SK-N-SH (cell line): ENCODE measurements at regions of chr17 and their contacts with region 1.

Region 1: GRCh38 chr17:42843358-42843934 is 934 bp upstream of the AOC2 start:
- DNase-seq: peak; percentile 80
- H3K4me3 ChIP-seq: no peak overlapping the region; a peak in 1 of 4 replicates
- H3K27ac ChIP-seq: no peak overlapping the region
- H3K4me1 ChIP-seq: no peaks in the 10 kb centered on the region
- H3K27me3 ChIP-seq: no peaks in the 10 kb centered on the region
- CTCF ChIP-seq: peak; percentile 92
- EP300 ChIP-seq: no peak
- RAD21 ChIP-seq: peak; percentile 81

Region 2: GRCh38 chr17:42819944-42820535 is 23.4 kb before region 1 on chr17:
- CTCF ChIA-PET with region 1: interaction called, 22 read pairs
- POLR2A ChIA-PET with region 1: no interaction called
- DNase-seq: peak; percentile 70
- H3K4me3 ChIP-seq: peak overlapping the region in 1 of 2 experiments; percentile 27; a peak in 1 of 4 replicates
- H3K27ac ChIP-seq: no peak overlapping the region
- H3K4me1 ChIP-seq: peaks cover 7 to 11% of the 10 kb centered on the region in 2 experiments
- H3K27me3 ChIP-seq: no peaks in the 10 kb centered on the region
- CTCF ChIP-seq: peak; percentile 89
- EP300 ChIP-seq: no peak
- RAD21 ChIP-seq: peak; percentile 40

Region 3: GRCh38 chr17:42827472-42827871 is 16.0 kb before region 1 on chr17:
- CTCF ChIA-PET with region 1: interaction called, 22 read pairs
- POLR2A ChIA-PET with region 1: no interaction called
- DNase-seq: no peak
- H3K4me3 ChIP-seq: no peak overlapping the region
- H3K27ac ChIP-seq: no peak overlapping the region
- H3K4me1 ChIP-seq: peaks cover 4 to 9% of the 10 kb centered on the region in 2 experiments; a peak in 3 of 4 replicates
- H3K27me3 ChIP-seq: no peaks in the 10 kb centered on the region
- CTCF ChIP-seq: no peak
- EP300 ChIP-seq: no peak
- RAD21 ChIP-seq: no peak

Region 4: GRCh38 chr17:42832974-42833766 is 10.3 kb before region 1 on chr17 and contains the start of gene PSME3:
- CTCF ChIA-PET with region 1: interaction called, 19 read pairs
- POLR2A ChIA-PET with region 1: no interaction called
- DNase-seq: peak; percentile 94
- H3K4me3 ChIP-seq: peak within 1 kb of the TSS; percentile 79 to 83
- H3K27ac ChIP-seq: peak within 1 kb of the TSS; percentile 74 to 86
- H3K4me1 ChIP-seq: peaks cover 4 to 9% of the 10 kb centered on the region in 2 experiments; a peak in 3 of 4 replicates
- H3K27me3 ChIP-seq: no peaks in the 10 kb centered on the region
- CTCF ChIP-seq: peak; percentile 14; the same call in 1 of the 2 replicates
- EP300 ChIP-seq: peak in 1 of 2 experiments; percentile 10; a peak in 1 of 4 replicates
- RAD21 ChIP-seq: no peak
- polyA plus RNA-seq, gene PSME3: 139 and 152 TPM in 2 replicates

Region 5: DNA sequence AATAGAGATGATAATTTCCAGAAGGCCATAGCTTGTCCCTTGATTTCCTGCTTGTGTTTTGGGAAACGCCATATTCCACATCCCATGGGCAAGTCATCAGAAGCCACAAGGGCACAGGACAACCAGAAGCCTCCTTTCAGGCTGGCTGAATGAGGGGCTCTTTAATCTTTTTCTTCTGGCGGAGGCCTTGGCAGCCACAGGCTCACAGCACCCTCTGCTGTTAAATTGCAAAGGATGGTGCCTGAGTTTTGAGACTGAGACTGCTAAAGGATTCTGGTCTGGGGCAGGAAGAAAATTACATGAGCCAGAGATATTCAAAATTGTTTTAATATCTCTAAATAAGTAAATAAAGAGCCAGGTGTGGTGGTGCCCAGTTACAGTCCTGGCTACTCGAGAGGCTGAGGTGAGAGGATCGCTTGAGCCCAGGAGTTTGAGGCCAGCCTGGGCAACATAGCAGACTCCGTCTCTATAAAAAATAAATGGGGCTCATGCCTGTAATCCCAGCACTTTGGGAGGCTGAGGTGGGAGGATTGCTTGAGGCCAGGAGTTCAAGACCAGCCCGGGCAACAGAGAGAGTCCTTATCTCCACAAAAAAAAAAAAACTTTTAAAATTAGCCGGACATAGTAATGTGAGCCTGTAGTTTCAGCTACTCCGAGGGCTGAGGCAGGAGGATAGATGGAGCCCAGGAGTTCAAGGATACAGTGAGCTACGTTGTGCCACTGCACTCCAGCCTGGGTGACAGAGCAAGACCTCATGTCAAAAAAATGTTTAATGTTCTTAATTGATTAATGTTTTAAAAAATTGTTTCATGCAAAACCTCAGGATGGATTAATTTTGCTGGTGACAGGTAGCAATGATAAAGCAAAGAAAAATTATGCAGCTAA is 94.5 kb after region 1 on chr17:
- CTCF ChIA-PET with region 1: interaction called, 34 read pairs
- POLR2A ChIA-PET with region 1: no interaction called
- DNase-seq: peak; percentile 68
- H3K4me3 ChIP-seq: no peak overlapping the region; a peak in 1 of 4 replicates
- H3K27ac ChIP-seq: no peak overlapping the region
- H3K4me1 ChIP-seq: no peaks in the 10 kb centered on the region
- H3K27me3 ChIP-seq: peaks cover 4% of the 10 kb centered on the region; the same call in 1 of the 2 replicates
- CTCF ChIP-seq: peak; percentile 76
- EP300 ChIP-seq: no peak
- RAD21 ChIP-seq: peak; percentile 88

Region 6: GRCh38 chr17:42997984-42998938 is 154.8 kb after region 1 on chr17 and contains the start of gene RPL27:
- CTCF ChIA-PET with region 1: interaction called, 25 read pairs
- POLR2A ChIA-PET with region 1: interaction called, 6 read pairs
- DNase-seq: peak; percentile 88
- H3K4me3 ChIP-seq: peak within 1 kb of the TSS; percentile 85 to 87
- H3K27ac ChIP-seq: peak within 1 kb of the TSS; percentile 87 to 90
- H3K4me1 ChIP-seq: peaks cover 6 to 11% of the 10 kb centered on the region in 2 experiments; a peak in 2 of 4 replicates
- H3K27me3 ChIP-seq: no peaks in the 10 kb centered on the region
- CTCF ChIP-seq: peak; percentile 77
- EP300 ChIP-seq: peak; percentile 54 to 57; a peak in 2 of 4 replicates
- RAD21 ChIP-seq: peak; percentile 70
- polyA plus RNA-seq, gene RPL27: 4,890 and 6,383 TPM in 2 replicates